ENCODE measurements at regions of chr10 and their contacts with region 1.

Region 1: GRCh38 chr10:62038609-62039190 is 137.2 kb downstream of the ARID5B start:
- DNase-seq: no peak
- ATAC-seq: peak; percentile 59
- H3K4me3 Mint-ChIP-seq: peak overlapping the region; percentile 69
- H3K27ac Mint-ChIP-seq: peak overlapping the region; percentile 93
- H3K4me1 Mint-ChIP-seq: peaks cover 90% of the 10 kb centered on the region
- H3K27me3 Mint-ChIP-seq: no peaks in the 10 kb centered on the region
- CTCF ChIP-seq: no peak

Region 2: GRCh38 chr10:61197057-61197456 is 841.6 kb before region 1 on chr10:
- CTCF ChIA-PET with region 1: no interaction called
- POLR2A ChIA-PET with region 1: no interaction called
- intact Hi-C with region 1: no loop called
- DNase-seq: no peak
- ATAC-seq: no peak
- H3K4me3 Mint-ChIP-seq: no peak overlapping the region
- H3K27ac Mint-ChIP-seq: no peak overlapping the region
- H3K4me1 Mint-ChIP-seq: no peaks in the 10 kb centered on the region
- H3K27me3 Mint-ChIP-seq: peaks cover 6% of the 10 kb centered on the region
- CTCF ChIP-seq: no peak

Region 3: GRCh38 chr10:61750929-61751471 is 287.7 kb before region 1 on chr10:
- CTCF ChIA-PET with region 1: interaction called, 17 read pairs
- POLR2A ChIA-PET with region 1: interaction called, 4 read pairs
- intact Hi-C with region 1: loop called (anchors 2 kb)
- DNase-seq: peak; percentile 47
- ATAC-seq: peak; percentile 97
- H3K4me3 Mint-ChIP-seq: peak overlapping the region; percentile 44
- H3K27ac Mint-ChIP-seq: no peak overlapping the region
- H3K4me1 Mint-ChIP-seq: peaks cover 38% of the 10 kb centered on the region
- H3K27me3 Mint-ChIP-seq: no peaks in the 10 kb centered on the region
- CTCF ChIP-seq: no peak

Region 4: GRCh38 chr10:61992671-61993668 is 45.7 kb before region 1 on chr10:
- CTCF ChIA-PET with region 1: interaction called, 12 read pairs
- POLR2A ChIA-PET with region 1: interaction called, 32 read pairs
- intact Hi-C with region 1: no loop called
- DNase-seq: no peak
- ATAC-seq: peak; percentile 59
- H3K4me3 Mint-ChIP-seq: peak overlapping the region; percentile 62
- H3K27ac Mint-ChIP-seq: peak overlapping the region; percentile 89
- H3K4me1 Mint-ChIP-seq: peaks cover 90% of the 10 kb centered on the region
- H3K27me3 Mint-ChIP-seq: no peaks in the 10 kb centered on the region
- CTCF ChIP-seq: no peak

Region 5: DNA sequence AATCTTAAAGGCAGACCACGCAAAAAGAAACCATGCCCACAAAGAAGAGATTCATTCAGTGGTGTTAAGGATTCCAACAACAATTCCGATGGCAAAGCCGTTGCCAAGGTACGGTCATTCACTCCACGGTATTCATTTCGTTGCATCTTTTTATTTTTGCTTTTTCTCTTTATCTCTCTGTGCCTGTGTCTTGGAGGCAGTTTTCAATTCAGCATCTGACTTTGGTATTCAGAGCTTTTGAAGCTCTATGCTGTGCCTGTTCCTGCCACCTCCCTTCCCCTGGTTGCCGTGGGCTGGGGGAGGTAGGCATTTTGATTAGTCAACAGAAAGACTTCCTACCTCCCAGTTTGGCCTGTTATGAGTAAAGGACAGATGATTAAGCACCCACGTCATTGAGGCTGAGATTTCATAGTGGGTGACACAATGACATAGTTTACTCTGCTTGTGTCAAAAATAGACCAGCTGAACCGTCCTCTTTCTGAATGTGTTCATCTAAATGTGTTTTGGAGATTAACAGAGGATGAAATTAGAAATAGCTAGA is 12.3 kb after region 1 on chr10:
- CTCF ChIA-PET with region 1: interaction called, 77 read pairs
- POLR2A ChIA-PET with region 1: interaction called, 103 read pairs
- intact Hi-C with region 1: loop called (anchors 1 kb)
- DNase-seq: no peak
- ATAC-seq: peak; percentile 60
- H3K4me3 Mint-ChIP-seq: peak overlapping the region; percentile 85
- H3K27ac Mint-ChIP-seq: peak overlapping the region; percentile 93
- H3K4me1 Mint-ChIP-seq: peaks cover 100% of the 10 kb centered on the region
- H3K27me3 Mint-ChIP-seq: no peaks in the 10 kb centered on the region
- CTCF ChIP-seq: no peak

Region 6: GRCh38 chr10:62166331-62167131 is 127.8 kb after region 1 on chr10:
- CTCF ChIA-PET with region 1: no interaction called
- POLR2A ChIA-PET with region 1: no interaction called
- intact Hi-C with region 1: loop called (anchors 2 kb)
- DNase-seq: no peak
- ATAC-seq: peak; percentile 96
- H3K4me3 Mint-ChIP-seq: peak overlapping the region; percentile 16
- H3K27ac Mint-ChIP-seq: peak overlapping the region; percentile 80
- H3K4me1 Mint-ChIP-seq: peaks cover 38% of the 10 kb centered on the region
- H3K27me3 Mint-ChIP-seq: no peaks in the 10 kb centered on the region
- CTCF ChIP-seq: no peak

Region 7: DNA sequence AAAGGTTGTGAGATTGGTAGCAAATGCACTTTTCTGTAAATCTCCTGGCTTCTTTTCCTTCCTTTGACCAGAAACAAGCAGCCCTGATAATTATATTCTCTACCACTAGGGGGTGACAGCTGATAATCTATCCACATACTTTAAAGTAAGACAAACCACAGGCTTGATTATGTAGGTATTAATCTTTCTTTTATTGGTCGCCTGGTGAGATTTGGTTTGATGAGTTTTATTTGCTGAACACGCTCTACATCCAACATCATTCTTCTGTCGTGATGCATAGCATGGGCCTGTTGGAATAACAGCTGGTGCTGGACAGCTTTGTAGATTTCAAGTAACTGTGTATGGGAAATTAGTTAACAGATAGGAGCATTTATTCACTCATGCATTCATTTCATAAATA is 399.0 kb after region 1 on chr10:
- CTCF ChIA-PET with region 1: no interaction called
- POLR2A ChIA-PET with region 1: no interaction called
- intact Hi-C with region 1: loop called (anchors 2 kb)
- DNase-seq: no peak
- ATAC-seq: peak; percentile 70
- H3K4me3 Mint-ChIP-seq: no peak overlapping the region
- H3K27ac Mint-ChIP-seq: no peak overlapping the region
- H3K4me1 Mint-ChIP-seq: peaks cover 2% of the 10 kb centered on the region
- H3K27me3 Mint-ChIP-seq: no peaks in the 10 kb centered on the region
- CTCF ChIP-seq: peak; percentile 90

Region 8: DNA sequence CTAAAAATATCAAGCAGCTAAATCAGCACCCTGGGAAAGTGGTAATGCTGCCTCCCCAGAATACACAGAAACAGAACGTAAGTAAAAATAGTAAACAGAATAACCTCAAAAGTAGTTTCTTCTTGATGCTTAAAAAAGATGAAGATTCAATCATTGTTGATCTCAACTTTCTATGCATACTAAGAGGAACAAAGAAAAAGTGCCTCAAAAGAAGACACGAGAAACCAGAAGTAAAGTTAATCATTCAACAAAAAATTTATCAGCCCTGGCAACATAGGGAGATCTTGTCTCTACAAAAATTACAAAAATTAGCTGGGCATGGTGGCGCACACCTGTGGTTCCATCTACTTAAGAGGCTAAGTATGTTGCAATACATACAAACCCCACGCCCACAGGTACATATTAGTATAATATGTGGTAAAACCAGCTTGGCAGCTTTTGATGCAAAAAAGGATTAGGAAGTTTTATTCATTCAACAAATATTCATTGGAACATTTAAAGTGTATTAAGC is 1248.1 kb after region 1 on chr10:
- CTCF ChIA-PET with region 1: no interaction called
- POLR2A ChIA-PET with region 1: no interaction called
- intact Hi-C with region 1: no loop called
- DNase-seq: no peak
- ATAC-seq: peak; percentile 37
- H3K4me3 Mint-ChIP-seq: no peak overlapping the region
- H3K27ac Mint-ChIP-seq: peak overlapping the region; percentile 68
- H3K4me1 Mint-ChIP-seq: peaks cover 24% of the 10 kb centered on the region
- H3K27me3 Mint-ChIP-seq: no peaks in the 10 kb centered on the region
- CTCF ChIP-seq: no peak